ENCODE measurements at regions of chr1 and their contacts with region 1.

Region 1: DNA sequence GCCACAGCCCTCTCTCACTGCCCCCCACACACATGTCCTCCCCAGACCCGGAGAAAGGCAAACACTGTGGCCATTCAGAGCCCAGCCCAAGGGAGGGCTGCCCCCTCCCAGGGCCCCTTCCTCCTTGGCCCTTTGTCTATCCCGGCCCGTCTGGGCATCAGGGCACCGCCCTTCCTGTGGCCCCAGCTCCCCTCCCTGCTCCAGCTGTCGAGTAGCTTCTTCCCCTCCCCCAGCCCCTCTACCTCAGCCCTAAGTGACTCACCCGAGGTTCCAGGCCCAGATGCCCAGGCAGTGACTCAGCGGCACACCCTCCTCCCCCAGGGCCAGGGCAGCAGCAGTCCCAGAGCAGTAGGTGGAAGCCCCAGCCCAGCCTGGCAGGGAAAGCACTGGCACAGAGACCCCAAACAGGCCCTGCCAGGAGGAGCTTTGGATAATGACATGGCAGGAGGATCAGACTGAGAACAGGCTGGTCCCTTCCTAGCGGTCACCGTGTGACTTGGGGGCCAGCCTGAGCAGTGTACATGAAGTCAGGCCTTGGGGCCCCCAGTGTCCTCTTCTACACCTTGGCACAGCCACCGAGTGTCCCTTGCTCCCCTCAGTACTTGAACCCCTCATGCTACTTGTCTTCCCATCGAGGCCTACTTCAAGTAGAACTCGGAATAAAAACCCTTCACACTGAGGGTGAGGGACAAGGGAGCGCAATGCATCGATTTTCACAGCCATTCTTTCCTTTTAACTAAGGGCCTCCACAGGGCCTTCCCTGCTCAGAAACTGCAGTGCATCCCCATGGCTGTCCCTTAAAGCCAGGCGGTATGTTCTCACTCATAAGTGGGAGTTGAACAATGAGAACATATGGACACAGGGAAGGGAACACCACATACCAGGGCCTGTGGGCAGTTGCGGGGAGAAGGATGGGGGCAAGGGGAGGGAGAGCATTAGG is 1.1 kb upstream of the S100A2 start:
- DNase-seq: peak; percentile 92 to 98 (median 98)
- H3K4me3 ChIP-seq: peak overlapping the region in 4 of 7 experiments; percentile 16 to 57 (median 30)
- H3K27ac ChIP-seq: peak overlapping the region; percentile 47 to 80
- H3K4me1 ChIP-seq: peaks cover 3 to 53% (median 33%) of the 10 kb centered on the region in 4 experiments
- H3K27me3 ChIP-seq: no peaks in the 10 kb centered on the region

Region 2: DNA sequence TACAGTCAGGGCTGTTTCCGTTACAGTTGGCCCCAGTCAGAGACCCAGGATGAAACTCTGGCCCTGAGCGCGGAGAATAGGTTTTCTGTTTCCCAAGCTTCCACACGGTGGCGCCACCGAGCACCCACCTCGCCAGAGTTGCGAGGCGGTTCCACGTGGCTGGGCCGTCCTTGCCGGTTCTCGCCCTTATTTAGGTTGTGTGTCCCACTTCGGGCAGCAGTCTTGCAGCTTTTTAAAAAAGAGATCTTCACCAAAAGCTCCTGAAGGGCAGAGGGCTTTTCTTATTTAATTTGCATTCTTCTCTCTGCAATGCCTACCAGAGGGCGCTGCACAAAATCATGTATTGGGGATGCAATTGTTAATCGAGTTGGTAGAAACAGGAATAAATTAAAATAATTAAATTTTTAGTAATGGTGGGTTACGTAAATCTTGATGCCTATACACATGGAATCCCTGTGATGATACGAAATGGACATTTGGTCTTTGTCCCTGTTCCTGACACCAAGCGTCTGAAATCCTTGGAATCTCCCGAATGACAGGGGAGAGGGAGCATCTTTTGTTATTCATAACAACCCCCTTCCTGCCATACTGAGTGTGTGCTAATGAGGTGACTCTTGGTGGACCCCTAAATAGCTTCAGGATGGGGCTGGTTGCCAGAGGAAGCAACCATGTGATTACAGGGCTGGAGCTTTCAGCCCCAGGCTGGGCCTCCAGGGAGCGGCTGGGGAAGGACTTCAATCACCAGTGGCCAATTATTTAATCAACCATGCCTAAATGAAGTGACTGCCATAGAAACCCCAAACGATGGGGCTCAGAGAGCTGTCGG is 100.7 kb before region 1 on chr1:
- CTCF ChIA-PET with region 1: no interaction called
- POLR2A ChIA-PET with region 1: no interaction called
- DNase-seq: peak; percentile 40 to 67 (median 63)
- H3K4me3 ChIP-seq: no peak overlapping the region
- H3K27ac ChIP-seq: no peak overlapping the region
- H3K4me1 ChIP-seq: peaks cover 0 to 3% (median 0%) of the 10 kb centered on the region in 4 experiments
- H3K27me3 ChIP-seq: peaks cover 0 to 8% (median 0%) of the 10 kb centered on the region in 5 experiments

Region 3: GRCh38 chr1:153478047-153478691 is 88.5 kb before region 1 on chr1:
- CTCF ChIA-PET with region 1: no interaction called
- POLR2A ChIA-PET with region 1: no interaction called
- DNase-seq: no peak
- H3K4me3 ChIP-seq: no peak overlapping the region
- H3K27ac ChIP-seq: no peak overlapping the region
- H3K4me1 ChIP-seq: no peaks in the 10 kb centered on the region
- H3K27me3 ChIP-seq: peaks cover 0 to 12% (median 10%) of the 10 kb centered on the region in 5 experiments

Region 4: GRCh38 chr1:153545067-153546055 is 21.3 kb before region 1 on chr1 and contains the start of gene S100A4:
- CTCF ChIA-PET with region 1: interaction called, 35 read pairs
- POLR2A ChIA-PET with region 1: interaction called, 15 read pairs
- DNase-seq: peak; percentile 83 to 93 (median 92)
- H3K4me3 ChIP-seq: peak within 1 kb of the TSS; percentile 21 to 87 (median 65)
- H3K27ac ChIP-seq: peak within 1 kb of the TSS; percentile 51 to 77
- H3K4me1 ChIP-seq: peaks cover 5 to 100% (median 63%) of the 10 kb centered on the region in 4 experiments
- H3K27me3 ChIP-seq: no peaks in the 10 kb centered on the region

Region 5: GRCh38 chr1:153550827-153551500 is 15.7 kb before region 1 on chr1:
- CTCF ChIA-PET with region 1: interaction called, 35 read pairs
- POLR2A ChIA-PET with region 1: interaction called, 15 read pairs
- DNase-seq: peak in 2 of 3 donors; percentile 49 to 50
- H3K4me3 ChIP-seq: peak overlapping the region in 1 of 7 experiments; percentile 17
- H3K27ac ChIP-seq: peak overlapping the region in 1 of 2 experiments; percentile 8
- H3K4me1 ChIP-seq: peaks cover 0 to 76% (median 41%) of the 10 kb centered on the region in 4 experiments
- H3K27me3 ChIP-seq: no peaks in the 10 kb centered on the region

Region 6: DNA sequence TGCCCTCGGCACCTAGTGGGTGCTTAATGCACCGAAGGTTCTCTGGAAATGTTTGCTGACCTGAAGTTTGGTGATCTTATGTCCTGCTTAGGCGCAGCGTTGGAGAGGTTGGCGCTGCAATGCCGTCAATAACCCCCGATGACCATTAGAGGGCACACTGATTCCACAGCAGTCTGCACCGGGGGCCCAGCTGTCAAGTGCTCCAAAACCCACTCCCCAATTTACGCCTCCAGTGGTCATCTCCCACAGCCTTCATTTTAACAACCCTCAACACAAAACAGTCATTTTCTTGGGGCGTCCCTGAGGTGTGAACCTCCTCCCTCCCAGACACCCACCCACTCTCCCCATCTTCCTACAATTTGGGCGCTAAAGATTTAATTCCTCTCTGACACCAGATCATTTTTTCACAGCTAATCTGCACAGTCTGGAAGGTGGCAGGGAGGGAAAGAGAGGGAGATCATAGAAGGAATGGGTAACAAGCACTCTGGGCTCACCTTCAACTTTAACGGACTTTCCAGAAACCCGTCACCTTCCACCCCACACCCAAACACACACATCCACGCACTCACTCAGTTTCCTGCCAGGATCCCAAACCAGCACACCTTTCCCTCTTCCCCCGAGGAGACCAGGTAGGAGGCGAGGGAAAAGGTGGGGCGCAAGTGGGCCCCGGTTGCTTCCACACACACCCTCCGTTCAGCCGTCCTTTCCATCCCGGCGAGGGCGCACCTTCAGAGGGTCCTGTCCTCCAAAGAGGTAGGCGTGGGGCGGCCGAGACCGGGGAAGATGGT is 111.2 kb after region 1 on chr1:
- CTCF ChIA-PET with region 1: no interaction called
- POLR2A ChIA-PET with region 1: no interaction called
- DNase-seq: peak; percentile 49 to 60 (median 59)
- H3K4me3 ChIP-seq: peak overlapping the region in 3 of 7 experiments; percentile 63 to 72 (median 66)
- H3K27ac ChIP-seq: no peak overlapping the region
- H3K4me1 ChIP-seq: peaks cover 0 to 23% (median 21%) of the 10 kb centered on the region in 4 experiments
- H3K27me3 ChIP-seq: peaks cover 5 to 43% (median 24%) of the 10 kb centered on the region in 5 experiments